Cardiac septum (tissue), 1 donor: ENCODE measurements at regions of chr4 and their contacts with region 1.

Region 1: DNA sequence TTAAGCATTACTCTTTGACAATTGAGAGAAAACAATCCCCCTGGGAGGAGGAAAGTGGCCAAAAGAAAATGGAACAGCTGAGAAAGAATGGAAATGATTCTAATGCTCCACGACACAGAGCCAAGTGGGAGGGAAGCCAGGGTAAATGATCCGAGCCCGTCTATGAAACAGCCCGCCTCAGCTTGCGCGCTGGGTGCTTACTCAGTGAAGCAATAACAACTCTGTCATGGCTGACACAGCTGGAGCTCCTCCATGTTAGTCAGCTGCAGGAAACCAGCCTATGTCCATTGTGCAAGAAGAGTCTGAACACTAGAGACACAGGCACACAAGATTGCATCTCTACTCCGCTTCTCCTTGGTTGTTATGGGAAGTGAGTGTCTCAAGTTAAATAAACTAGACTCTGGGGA is 19.3 kb downstream of the NOA1 start:
- DNase-seq: peak; percentile 86

Region 2: DNA sequence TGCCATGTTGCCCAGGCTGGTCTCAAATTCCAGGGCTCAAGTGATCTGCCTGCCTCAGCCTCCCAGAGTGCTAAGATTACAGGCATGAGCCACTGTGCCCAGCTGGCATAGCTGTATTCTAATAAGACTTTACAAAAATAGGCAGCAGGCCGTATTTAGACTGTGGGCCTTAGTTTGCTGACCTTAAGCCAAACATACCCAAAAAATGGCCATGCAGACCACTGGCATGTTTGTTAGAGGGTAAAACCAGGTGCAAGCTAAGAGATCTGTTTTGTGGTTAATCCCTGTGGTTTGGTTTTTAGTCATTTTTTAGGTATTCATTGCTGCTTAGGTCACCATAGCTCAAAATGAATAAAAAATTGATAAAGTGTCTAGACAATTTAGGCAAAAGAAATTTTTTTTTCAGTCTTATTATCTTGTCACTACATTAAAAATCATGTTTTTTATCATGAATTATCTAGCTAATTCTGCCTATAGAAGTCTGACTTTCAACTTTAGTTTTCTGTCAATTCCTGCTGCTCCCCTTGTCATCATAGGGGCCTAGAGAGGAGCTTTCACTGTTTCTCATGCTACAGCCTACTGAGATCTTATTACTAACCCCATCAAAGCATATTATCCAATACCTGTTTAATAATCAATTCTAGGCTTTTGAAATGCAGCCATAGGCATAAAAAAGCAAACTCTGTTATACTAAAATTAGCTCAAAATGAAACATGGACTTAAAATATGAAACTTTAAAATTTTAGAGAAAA is 129.2 kb before region 1 on chr4:
- intact Hi-C with region 1: no loop called
- DNase-seq: no peak

Region 3: DNA sequence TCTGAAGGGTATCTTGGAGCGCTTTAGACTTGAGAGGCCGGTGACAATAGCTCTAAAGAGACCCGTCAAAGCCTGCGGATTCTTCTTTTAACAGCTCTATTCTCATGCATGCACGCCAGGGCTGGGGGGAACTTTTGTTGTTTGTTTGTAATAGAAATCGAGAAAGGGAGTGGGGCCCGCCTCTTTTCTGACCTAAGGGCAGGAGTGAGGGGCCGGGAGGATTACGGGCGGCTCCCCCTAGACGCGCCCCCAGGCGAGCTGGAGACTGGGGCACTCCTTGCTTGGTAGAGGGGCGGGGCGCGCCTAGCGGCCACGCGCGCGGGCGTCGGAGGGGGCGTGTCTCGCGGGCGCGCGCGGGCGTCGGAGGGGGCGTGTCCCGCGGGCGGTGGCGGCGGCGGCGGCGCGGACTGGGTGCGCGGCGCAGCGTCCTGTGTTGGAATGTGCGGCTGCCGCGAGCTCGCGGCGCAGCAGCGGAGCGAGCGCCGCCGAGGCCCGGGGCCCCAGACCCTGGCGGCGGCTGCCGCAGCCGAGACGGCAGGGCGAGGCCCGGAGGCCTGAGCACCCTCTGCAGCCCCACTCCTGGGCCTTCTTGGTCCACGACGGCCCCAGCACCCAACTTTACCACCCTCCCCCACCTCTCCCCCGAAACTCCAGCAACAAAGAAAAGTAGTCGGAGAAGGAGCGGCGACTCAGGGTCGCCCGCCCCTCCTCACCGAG is 50.5 kb before region 1 on chr4 and contains the start of gene REST:
- intact Hi-C with region 1: loop called (anchors 5 kb)
- DNase-seq: peak; percentile 91
- total RNA-seq, gene REST: 33.9 TPM